Posterior vena cava (tissue), 2 donors: ENCODE measurements at regions of chr9 and their contacts with region 1.

Region 1: GRCh38 chr9:116149844-116150243 is 3.7 kb upstream of the PAPPA start:
- DNase-seq: no peak

Region 2: GRCh38 chr9:115591584-115591984 is 558.3 kb before region 1 on chr9:
- intact Hi-C with region 1: loop called in 1 of 2 experiments (anchors 10 kb)
- DNase-seq: peak; percentile 82

Region 3: DNA sequence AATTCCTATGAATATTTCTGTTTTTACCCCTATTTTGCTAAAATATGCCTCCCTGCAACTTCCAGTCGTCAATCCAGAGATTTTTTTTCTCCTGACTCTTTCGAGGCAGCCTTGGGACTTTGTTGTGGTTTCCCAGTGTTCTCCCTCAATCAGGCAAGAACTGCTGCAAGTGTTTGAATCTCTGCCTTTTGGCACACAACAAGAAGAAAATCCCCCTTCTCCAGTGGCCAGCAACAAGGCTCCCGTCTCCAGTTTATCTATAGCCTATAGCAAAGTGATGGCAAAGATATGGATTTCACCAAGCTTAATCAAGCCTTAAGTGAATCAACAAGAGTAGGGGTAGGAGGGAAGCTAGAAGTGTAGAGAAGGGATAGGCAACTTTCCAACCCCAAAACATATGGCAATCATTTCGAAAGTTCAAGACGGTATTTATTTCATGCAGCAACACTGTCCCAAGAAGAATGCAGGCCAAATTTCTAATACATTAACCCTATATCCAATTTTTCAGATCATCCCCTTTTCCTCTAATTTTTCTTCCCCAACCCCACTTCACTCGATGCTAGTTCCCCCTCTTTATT is 34.0 kb before region 1 on chr9:
- intact Hi-C with region 1: loop called in 1 of 2 experiments (anchors 1 kb)
- DNase-seq: no peak

Region 4: GRCh38 chr9:116166710-116167385 is 17.0 kb after region 1 on chr9:
- intact Hi-C with region 1: loop called in 1 of 2 experiments (anchors 1 kb)
- DNase-seq: no peak

Region 5: GRCh38 chr9:116471093-116471906 is 321.5 kb after region 1 on chr9:
- intact Hi-C with region 1: loop called in 1 of 2 experiments (anchors 10 kb)
- DNase-seq: no peak

Region 6: GRCh38 chr9:116564266-116564793 is 414.5 kb after region 1 on chr9:
- intact Hi-C with region 1: loop called in 1 of 2 experiments (anchors 5 kb)
- DNase-seq: no peak

Region 7: DNA sequence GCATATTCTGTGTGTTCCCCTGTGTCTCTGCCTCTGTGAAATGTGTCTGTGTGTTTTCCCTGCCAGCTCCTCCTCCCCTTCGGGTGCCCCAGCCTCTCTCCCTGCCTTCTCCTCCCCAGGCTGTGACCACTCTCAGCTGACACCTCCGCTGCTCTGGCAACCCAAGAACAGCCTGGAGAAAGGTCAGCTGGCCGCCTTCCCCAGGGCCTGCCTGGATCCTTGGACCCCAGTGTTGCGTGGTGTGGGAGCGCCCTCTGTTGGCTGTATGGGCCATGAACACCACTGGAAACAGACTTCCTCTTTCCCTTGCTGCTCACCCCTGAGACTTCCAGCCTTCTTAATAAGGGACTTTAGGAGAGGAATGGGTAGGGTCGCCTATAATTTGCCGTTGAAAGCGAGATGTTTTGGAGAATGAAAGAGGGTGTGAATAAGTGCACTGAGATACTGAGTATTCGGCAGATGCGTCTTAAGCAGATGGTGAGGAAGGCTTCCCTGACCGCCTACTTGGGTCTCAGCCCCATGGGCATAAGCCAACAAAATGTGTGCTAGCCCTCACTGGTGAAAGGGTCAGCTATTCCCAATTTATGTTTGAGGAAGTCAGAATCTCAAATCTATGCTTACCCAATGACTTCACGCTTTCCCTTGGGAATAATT is 422.4 kb after region 1 on chr9:
- intact Hi-C with region 1: loop called in 1 of 2 experiments (anchors 10 kb)
- DNase-seq: peak; percentile 96